Activated T-helper 2 cell treated with anti-CD3 and anti-CD28 coated beads, Interferon-gamma antibody, Interleukin-2, Interleukin-4, amounts not matched to agents 10 μg/mL and 5 μg/mL and 100 μg/mL, durations not matched to agents 14 hours and 24 hours and 36 hours (primary cell): ENCODE measurements at regions of chr1 and their contacts with region 1.

Region 1: GRCh38 chr1:200139661-200140250 is 112.2 kb downstream of the NR5A2 start:
- DNase-seq: no peak
- H3K4me3 Mint-ChIP-seq: no peak overlapping the region
- H3K27ac Mint-ChIP-seq: no peak overlapping the region
- H3K4me1 Mint-ChIP-seq: peaks cover 8% of the 10 kb centered on the region
- H3K27me3 Mint-ChIP-seq: peaks cover 27% of the 10 kb centered on the region

Region 2: DNA sequence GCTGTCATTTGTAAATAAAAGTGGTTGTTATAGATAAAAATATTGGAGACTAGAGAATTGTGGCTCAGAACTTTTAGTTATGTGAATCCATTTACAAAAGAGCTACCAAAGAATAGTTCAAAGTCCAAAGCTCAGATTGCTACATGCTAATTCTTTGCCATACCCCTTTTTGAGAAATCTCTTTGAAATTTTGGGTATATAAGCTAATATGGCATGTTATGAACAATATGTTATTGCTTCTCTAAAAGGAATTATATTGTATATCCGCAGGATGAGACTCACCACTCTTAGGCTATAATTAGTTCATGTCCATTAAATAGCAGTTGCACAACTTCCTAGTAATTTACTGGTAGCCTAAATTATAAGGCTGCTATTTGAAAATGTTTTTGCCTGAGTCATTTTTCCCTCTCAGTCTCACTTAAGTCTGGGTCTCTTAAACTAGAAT is 92.1 kb after region 1 on chr1:
- intact Hi-C with region 1: no loop called
- DNase-seq: no peak
- H3K4me3 Mint-ChIP-seq: no peak overlapping the region
- H3K27ac Mint-ChIP-seq: no peak overlapping the region
- H3K4me1 Mint-ChIP-seq: peaks cover 2% of the 10 kb centered on the region
- H3K27me3 Mint-ChIP-seq: peaks cover 41% of the 10 kb centered on the region

Region 3: GRCh38 chr1:200302192-200302920 is 162.6 kb after region 1 on chr1:
- intact Hi-C with region 1: loop called (anchors 2 kb)
- DNase-seq: peak; percentile 52
- H3K4me3 Mint-ChIP-seq: peak overlapping the region; percentile 77
- H3K27ac Mint-ChIP-seq: no peak overlapping the region
- H3K4me1 Mint-ChIP-seq: peaks cover 23% of the 10 kb centered on the region
- H3K27me3 Mint-ChIP-seq: peaks cover 54% of the 10 kb centered on the region